Dorsolateral prefrontal cortex (tissue), 120 donors: ENCODE measurements at regions of chr11 and their contacts with region 1.

Region 1: GRCh38 chr11:131408025-131408640 is 37.7 kb downstream of the NTM start:
- DNase-seq: peak in 3 of 10 donors; percentile 46 to 57 (median 52)
- H3K4me3 ChIP-seq: no peak overlapping the region
- H3K27ac ChIP-seq: peak overlapping the region in 1 of 59 donors; percentile 12
- H3K27me3 ChIP-seq: no peaks in the 10 kb centered on the region
- CTCF ChIP-seq: peak in 53 of 56 donors; percentile 19 to 76 (median 51)

Region 2: GRCh38 chr11:131504199-131504949 is 96.2 kb after region 1 on chr11:
- intact Hi-C with region 1: loop called (anchors 5 to 10 kb)
- DNase-seq: peak; percentile 26 to 84 (median 76)
- H3K4me3 ChIP-seq: peak overlapping the region in 22 of 59 donors; percentile 3 to 41 (median 24)
- H3K27ac ChIP-seq: peak overlapping the region in 54 of 59 donors; percentile 2 to 86 (median 68)
- H3K27me3 ChIP-seq: no peaks in the 10 kb centered on the region
- CTCF ChIP-seq: peak; percentile 15 to 80 (median 65)